Heart left ventricle (tissue), 16 donors: ENCODE measurements at regions of chr6 and their contacts with region 1.

Region 1: DNA sequence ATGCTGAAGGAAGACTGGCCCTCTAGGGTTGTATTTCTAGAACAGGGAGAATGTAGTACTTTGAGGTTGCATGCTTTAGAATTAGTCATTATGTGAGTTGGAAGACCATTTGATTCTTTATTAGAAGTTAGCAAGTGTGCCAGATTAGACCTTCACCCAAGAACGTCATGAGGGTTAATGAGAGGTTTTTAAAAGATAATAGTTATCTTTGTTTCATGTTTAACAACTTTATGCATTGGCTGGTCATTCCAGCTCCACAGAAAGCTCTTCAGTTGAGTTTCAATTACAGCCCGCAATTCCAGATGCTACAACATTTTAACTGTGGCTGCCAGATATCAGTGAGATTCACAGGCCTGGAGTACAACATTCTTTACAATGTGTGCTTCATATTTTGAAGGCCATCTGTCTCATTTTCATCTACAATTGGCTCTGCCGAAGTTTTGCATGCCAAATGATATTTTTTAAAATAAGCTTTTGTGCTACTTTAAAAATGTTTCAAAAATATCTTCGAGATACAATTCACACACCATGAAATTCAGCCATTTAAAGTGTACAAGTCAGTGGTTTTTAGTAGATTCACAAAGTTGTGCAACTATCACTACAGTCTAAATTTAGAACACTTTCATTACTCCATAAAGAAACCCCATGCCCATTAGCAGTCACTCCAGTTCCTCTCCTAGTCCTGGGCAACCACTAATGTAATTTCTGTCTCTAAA is 61.1 kb upstream of the FBXO30 start:
- DNase-seq: no peak
- ATAC-seq: peak; percentile 37 to 73 (median 70)
- H3K4me3 ChIP-seq: no peak overlapping the region
- H3K27ac ChIP-seq: peak overlapping the region in 1 of 12 donors; percentile 19
- H3K4me1 ChIP-seq: peaks cover 0 to 26% (median 12%) of the 10 kb centered on the region in 12 donors
- H3K27me3 ChIP-seq: no peaks in the 10 kb centered on the region
- CTCF ChIP-seq: no peak
- POLR2A ChIP-seq: no peak

Region 2: GRCh38 chr6:145814501-145815308 is 60.9 kb before region 1 on chr6 and contains the start of gene FBXO30:
- intact Hi-C with region 1: loop called in 1 of 10 experiments (anchors 10 kb)
- DNase-seq: peak; percentile 88 to 94 (median 90)
- ATAC-seq: peak; percentile 91 to 98 (median 97)
- H3K4me3 ChIP-seq: peak within 1 kb of the TSS; percentile 50 to 82 (median 72)
- H3K27ac ChIP-seq: peak within 1 kb of the TSS; percentile 87 to 97 (median 94)
- H3K4me1 ChIP-seq: peaks cover 0 to 58% (median 40%) of the 10 kb centered on the region in 12 donors
- H3K27me3 ChIP-seq: no peaks in the 10 kb centered on the region
- CTCF ChIP-seq: peak in 3 of 12 donors; percentile 7 to 26 (median 9)
- POLR2A ChIP-seq: peak; percentile 26 to 91
- total RNA-seq, gene FBXO30: 9.0 to 17.1 (median 14.4) TPM